Transverse colon (tissue), 4 donors: ENCODE measurements at regions of chr11 and their contacts with region 1.

Region 1: DNA sequence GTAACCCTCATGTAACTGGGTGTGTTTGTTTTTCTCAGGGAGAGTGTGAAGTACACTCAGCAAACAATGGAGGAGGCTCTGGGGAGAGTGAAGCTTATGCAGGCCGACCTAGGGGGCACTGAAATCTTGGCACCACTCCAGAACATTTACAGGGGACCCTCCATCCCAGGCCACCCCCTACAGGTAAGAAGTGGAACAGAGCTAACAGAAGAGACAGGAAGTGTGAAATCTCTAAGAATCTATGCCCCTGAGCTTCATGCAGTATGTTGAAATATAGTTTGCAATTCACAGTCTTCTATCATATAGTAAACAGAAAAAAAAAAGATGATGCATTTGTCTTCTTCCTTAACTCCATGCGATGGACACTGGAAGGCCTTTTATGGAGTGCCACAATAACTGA is 8.4 kb downstream of the VWA5A start:
- DNase-seq: no peak
- H3K4me3 ChIP-seq: no peak overlapping the region
- H3K27ac ChIP-seq: no peak overlapping the region
- H3K4me1 ChIP-seq: no peaks in the 10 kb centered on the region
- H3K27me3 ChIP-seq: no peaks in the 10 kb centered on the region
- CTCF ChIP-seq: no peak
- EP300 ChIP-seq: no peak
- POLR2A ChIP-seq: no peak

Region 2: DNA sequence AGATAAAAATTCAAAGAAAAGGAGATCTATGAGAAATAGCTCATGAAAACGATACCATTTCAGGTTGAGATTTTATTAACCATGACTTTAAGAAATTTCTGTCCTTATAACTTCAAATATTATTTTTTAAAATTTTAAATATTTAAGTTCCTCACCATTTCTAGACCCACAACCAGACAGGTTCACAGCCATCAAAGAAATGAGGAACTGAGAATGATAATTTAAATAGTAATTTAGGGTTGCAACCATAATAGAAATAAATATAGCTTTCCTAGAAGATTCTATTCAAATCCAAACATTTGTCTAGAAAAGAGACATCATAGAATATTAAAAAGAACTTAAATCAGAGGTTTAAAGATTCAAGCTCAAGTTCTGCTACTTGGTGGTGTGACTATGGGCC is 14.2 kb before region 1 on chr11:
- in situ Hi-C with region 1: no loop called
- intact Hi-C with region 1: loop called (anchors 1 kb)
- DNase-seq: no peak
- H3K4me3 ChIP-seq: no peak overlapping the region
- H3K27ac ChIP-seq: no peak overlapping the region
- H3K4me1 ChIP-seq: peaks cover 0 to 9% (median 1%) of the 10 kb centered on the region in 4 donors
- H3K27me3 ChIP-seq: no peaks in the 10 kb centered on the region
- CTCF ChIP-seq: no peak
- EP300 ChIP-seq: no peak
- POLR2A ChIP-seq: no peak